Activated CD4-positive, alpha-beta memory T cell treated with anti-CD3 and anti-CD28 coated beads for 36 hours (primary cell): ENCODE measurements at regions of chr2 and their contacts with region 1.

Region 1: DNA sequence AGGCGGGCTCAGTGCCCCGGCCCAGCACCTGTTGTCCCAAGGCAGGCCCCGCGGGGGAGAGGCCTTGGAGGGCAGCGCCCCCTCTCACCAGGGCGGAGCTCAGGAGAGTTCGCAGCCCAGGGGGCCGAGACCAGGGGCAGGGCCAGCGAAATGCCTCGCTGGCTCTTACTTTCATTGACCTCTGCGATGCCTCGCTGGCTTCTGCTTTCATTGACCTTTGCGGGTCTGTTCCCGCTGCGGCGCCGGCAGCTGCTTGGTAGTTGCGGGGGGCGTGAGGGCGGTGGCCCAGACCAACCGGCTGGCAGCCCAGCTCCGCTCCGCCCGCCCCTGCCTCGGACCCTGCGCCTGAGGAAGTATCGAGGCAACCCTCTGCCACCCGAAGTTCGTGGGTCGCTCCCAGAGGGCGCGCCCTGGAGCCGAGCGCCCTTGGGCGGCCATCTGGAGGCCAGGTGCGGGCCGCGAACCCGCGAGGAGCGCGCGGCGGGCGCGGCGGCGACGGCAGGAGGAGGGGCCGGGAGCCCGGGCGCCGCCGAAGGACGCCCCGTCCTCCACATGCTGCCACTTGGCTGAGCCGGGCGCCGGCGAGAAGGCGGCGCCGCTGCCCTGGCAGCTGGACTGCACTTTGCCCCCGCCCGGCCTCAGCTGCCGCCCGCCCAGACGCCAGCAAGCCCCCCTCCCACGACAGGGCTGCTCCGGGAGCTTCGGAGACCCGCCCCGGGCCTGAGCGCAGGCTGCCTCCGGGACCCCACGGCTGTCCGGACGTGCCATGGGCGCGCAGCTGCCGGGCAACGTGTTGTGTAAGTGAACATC is 118.0 kb upstream of the MSTN start:
- DNase-seq: peak; percentile 32
- H3K4me3 Mint-ChIP-seq: no peak overlapping the region
- H3K27ac Mint-ChIP-seq: no peak overlapping the region
- H3K4me1 Mint-ChIP-seq: peaks cover 6% of the 10 kb centered on the region
- H3K27me3 Mint-ChIP-seq: peaks cover 19% of the 10 kb centered on the region

Region 2: GRCh38 chr2:190365499-190366204 is 185.1 kb after region 1 on chr2:
- CTCF ChIA-PET with region 1: no interaction called
- POLR2A ChIA-PET with region 1: no interaction called
- intact Hi-C with region 1: loop called (anchors 10 kb)
- DNase-seq: no peak
- H3K4me3 Mint-ChIP-seq: no peak overlapping the region
- H3K27ac Mint-ChIP-seq: no peak overlapping the region
- H3K4me1 Mint-ChIP-seq: peaks cover 5% of the 10 kb centered on the region
- H3K27me3 Mint-ChIP-seq: no peaks in the 10 kb centered on the region